ENCODE measurements at regions of chr11 and their contacts with region 1.

Region 1: GRCh38 chr11:102325088-102325487 is 7.8 kb downstream of the BIRC3 start:
- DNase-seq: no peak
- H3K4me3 ChIP-seq: no peak overlapping the region
- H3K4me3 Mint-ChIP-seq: no peak overlapping the region
- H3K27ac ChIP-seq: no peak overlapping the region
- H3K27ac Mint-ChIP-seq: no peak overlapping the region
- H3K4me1 ChIP-seq: peaks cover 0 to 14% of the 10 kb centered on the region in 2 donors
- H3K4me1 Mint-ChIP-seq: peaks cover 19% of the 10 kb centered on the region
- H3K27me3 ChIP-seq: no peaks in the 10 kb centered on the region
- H3K27me3 Mint-ChIP-seq: no peaks in the 10 kb centered on the region
- CTCF ChIP-seq: no peak

Region 2: GRCh38 chr11:102293873-102294601 is 31.1 kb before region 1 on chr11:
- intact Hi-C with region 1: loop called in 1 of 2 experiments (anchors 5 kb)
- DNase-seq: peak; percentile 64 to 83 (median 74)
- H3K4me3 ChIP-seq: peak overlapping the region in 1 of 3 experiments; percentile 26
- H3K4me3 Mint-ChIP-seq: peak overlapping the region; percentile 17 to 77
- H3K27ac ChIP-seq: no peak overlapping the region
- H3K27ac Mint-ChIP-seq: peak overlapping the region in 6 of 7 donors; percentile 59 to 86 (median 78)
- H3K4me1 ChIP-seq: peaks cover 0 to 6% of the 10 kb centered on the region in 2 donors
- H3K4me1 Mint-ChIP-seq: peaks cover 25% of the 10 kb centered on the region
- H3K27me3 ChIP-seq: no peaks in the 10 kb centered on the region
- H3K27me3 Mint-ChIP-seq: peaks cover 0 to 2% (median 1%) of the 10 kb centered on the region in 3 donors
- CTCF ChIP-seq: peak; percentile 79

Region 3: GRCh38 chr11:102599642-102600261 is 274.7 kb after region 1 on chr11:
- intact Hi-C with region 1: no loop called
- DNase-seq: peak; percentile 37 to 75 (median 45)
- H3K4me3 ChIP-seq: no peak overlapping the region
- H3K4me3 Mint-ChIP-seq: no peak overlapping the region
- H3K27ac ChIP-seq: no peak overlapping the region
- H3K27ac Mint-ChIP-seq: peak overlapping the region in 4 of 7 donors; percentile 53 to 88 (median 82)
- H3K4me1 ChIP-seq: no peaks in the 10 kb centered on the region
- H3K4me1 Mint-ChIP-seq: peaks cover 6% of the 10 kb centered on the region
- H3K27me3 ChIP-seq: no peaks in the 10 kb centered on the region
- H3K27me3 Mint-ChIP-seq: peaks cover 0 to 2% (median 2%) of the 10 kb centered on the region in 3 donors
- CTCF ChIP-seq: no peak